ENCODE measurements at regions of chr6 and their contacts with region 1.

Region 1: GRCh38 chr6:121430514-121431460 is 4.7 kb upstream of the GJA1 start:
- DNase-seq: no peak
- ATAC-seq: no peak
- H3K4me3 ChIP-seq: no peak overlapping the region
- H3K4me3 Mint-ChIP-seq: no peak overlapping the region
- H3K27ac ChIP-seq: no peak overlapping the region
- H3K27ac Mint-ChIP-seq: peak overlapping the region in 1 of 9 donors; percentile 2
- H3K4me1 ChIP-seq: no peaks in the 10 kb centered on the region
- H3K4me1 Mint-ChIP-seq: peaks cover 0 to 23% (median 12%) of the 10 kb centered on the region in 7 donors
- H3K27me3 ChIP-seq: no peaks in the 10 kb centered on the region
- H3K27me3 Mint-ChIP-seq: peaks cover 0 to 9% (median 0%) of the 10 kb centered on the region in 5 donors

Region 2: GRCh38 chr6:121093928-121094327 is 336.9 kb before region 1 on chr6:
- CTCF ChIA-PET with region 1: no interaction called
- POLR2A ChIA-PET with region 1: no interaction called
- intact Hi-C with region 1: no loop called
- DNase-seq: no peak
- ATAC-seq: no peak
- H3K4me3 ChIP-seq: no peak overlapping the region
- H3K4me3 Mint-ChIP-seq: no peak overlapping the region
- H3K27ac ChIP-seq: no peak overlapping the region
- H3K27ac Mint-ChIP-seq: no peak overlapping the region
- H3K4me1 ChIP-seq: no peaks in the 10 kb centered on the region
- H3K4me1 Mint-ChIP-seq: no peaks in the 10 kb centered on the region
- H3K27me3 ChIP-seq: no peaks in the 10 kb centered on the region
- H3K27me3 Mint-ChIP-seq: no peaks in the 10 kb centered on the region

Region 3: DNA sequence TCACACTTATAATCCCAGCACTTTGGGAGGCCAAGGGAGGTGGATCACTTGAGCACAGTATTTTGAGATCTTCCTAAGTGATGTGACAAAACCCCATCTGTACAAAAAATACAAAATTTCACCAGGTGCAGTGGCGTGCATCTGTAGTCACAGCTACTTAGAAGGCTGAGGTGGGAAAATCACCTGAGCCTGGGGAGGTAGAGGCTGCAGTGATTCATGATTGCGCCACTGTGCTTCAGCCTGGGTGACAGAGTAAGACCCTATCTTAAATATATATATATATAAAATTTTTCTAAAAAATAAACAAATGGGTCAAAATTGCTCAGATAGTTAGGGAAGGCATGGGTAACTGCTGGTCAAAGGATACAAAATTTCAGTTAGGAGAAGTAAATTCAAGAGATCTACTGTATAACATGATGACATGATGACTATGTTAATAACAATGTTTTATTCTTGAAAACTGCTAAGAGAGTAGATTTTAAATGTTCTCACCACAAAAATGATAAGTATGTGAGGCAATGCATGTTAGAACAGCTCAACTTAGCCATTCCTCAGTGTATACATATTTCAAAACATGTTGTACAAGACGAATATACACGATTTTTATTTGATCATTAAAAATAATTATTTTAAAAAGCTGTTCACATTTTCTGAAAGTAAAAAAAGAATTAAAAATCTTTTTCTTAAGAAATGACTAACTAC is 120.9 kb before region 1 on chr6:
- CTCF ChIA-PET with region 1: no interaction called
- POLR2A ChIA-PET with region 1: no interaction called
- intact Hi-C with region 1: no loop called
- DNase-seq: no peak
- ATAC-seq: no peak
- H3K4me3 ChIP-seq: no peak overlapping the region
- H3K4me3 Mint-ChIP-seq: no peak overlapping the region
- H3K27ac ChIP-seq: no peak overlapping the region
- H3K27ac Mint-ChIP-seq: no peak overlapping the region
- H3K4me1 ChIP-seq: no peaks in the 10 kb centered on the region
- H3K4me1 Mint-ChIP-seq: no peaks in the 10 kb centered on the region
- H3K27me3 ChIP-seq: no peaks in the 10 kb centered on the region
- H3K27me3 Mint-ChIP-seq: no peaks in the 10 kb centered on the region

Region 4: DNA sequence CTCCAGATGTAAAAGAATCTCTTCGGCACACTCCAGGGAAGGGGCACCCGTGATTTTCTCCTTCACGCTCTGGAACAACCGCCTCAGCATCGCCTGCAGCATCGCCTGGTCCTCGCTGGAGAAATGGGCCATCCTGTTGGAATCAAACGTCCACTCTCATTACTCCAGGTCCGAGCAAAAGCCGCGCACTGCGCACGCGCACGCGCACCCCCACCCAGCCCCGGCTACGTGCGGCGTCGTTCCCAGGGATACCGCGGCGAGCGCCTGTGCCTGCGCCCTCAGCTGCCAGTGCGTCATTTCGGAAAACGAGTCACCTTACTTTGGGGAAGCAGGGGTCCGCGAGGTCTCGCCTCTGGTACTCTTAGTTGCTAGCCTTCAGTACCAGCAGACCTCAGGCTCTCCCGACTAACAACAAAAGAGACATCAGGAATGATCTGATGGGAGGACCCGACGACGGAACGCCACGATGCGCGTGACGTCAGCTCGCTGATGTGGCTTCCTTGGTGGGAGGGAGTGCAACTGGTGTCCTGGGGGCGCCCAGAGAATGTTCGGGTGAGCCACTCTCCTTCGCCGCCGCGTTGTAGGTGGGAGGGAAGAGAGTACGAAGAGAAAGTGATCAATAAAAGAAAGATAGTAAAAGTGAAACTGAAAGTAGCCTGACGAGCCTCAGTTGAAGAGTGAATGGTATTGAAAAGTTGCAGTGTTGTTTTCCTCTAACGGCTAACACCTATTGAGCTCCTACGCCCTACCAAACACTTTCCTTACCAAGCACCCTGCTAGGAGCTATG is 96.3 kb before region 1 on chr6 and contains the start of gene TBC1D32:
- CTCF ChIA-PET with region 1: no interaction called
- POLR2A ChIA-PET with region 1: no interaction called
- intact Hi-C with region 1: no loop called
- DNase-seq: peak; percentile 84 to 90 (median 89)
- ATAC-seq: peak; percentile 92
- H3K4me3 ChIP-seq: peak within 1 kb of the TSS; percentile 74
- H3K4me3 Mint-ChIP-seq: peak within 1 kb of the TSS; percentile 86 to 99 (median 98)
- H3K27ac ChIP-seq: peak within 1 kb of the TSS; percentile 97
- H3K27ac Mint-ChIP-seq: peak within 1 kb of the TSS; percentile 97 to 100 (median 99)
- H3K4me1 ChIP-seq: peaks cover 4 to 8% of the 10 kb centered on the region in 2 donors
- H3K4me1 Mint-ChIP-seq: peaks cover 16 to 45% (median 35%) of the 10 kb centered on the region in 7 donors
- H3K27me3 ChIP-seq: no peaks in the 10 kb centered on the region
- H3K27me3 Mint-ChIP-seq: peaks cover 0 to 11% (median 0%) of the 10 kb centered on the region in 5 donors
- total RNA-seq, gene TBC1D32: 12.5 to 17.7 (median 15.8) TPM

Region 5: GRCh38 chr6:121694389-121695251 is 263.8 kb after region 1 on chr6:
- CTCF ChIA-PET with region 1: no interaction called
- POLR2A ChIA-PET with region 1: no interaction called
- intact Hi-C with region 1: loop called in 1 of 2 experiments (anchors 10 kb)
- DNase-seq: no peak
- ATAC-seq: no peak
- H3K4me3 ChIP-seq: no peak overlapping the region
- H3K4me3 Mint-ChIP-seq: no peak overlapping the region
- H3K27ac ChIP-seq: no peak overlapping the region
- H3K27ac Mint-ChIP-seq: no peak overlapping the region
- H3K4me1 ChIP-seq: peaks cover 0 to 9% of the 10 kb centered on the region in 2 donors
- H3K4me1 Mint-ChIP-seq: peaks cover 0 to 22% (median 11%) of the 10 kb centered on the region in 7 donors
- H3K27me3 ChIP-seq: no peaks in the 10 kb centered on the region
- H3K27me3 Mint-ChIP-seq: peaks cover 0 to 6% (median 0%) of the 10 kb centered on the region in 5 donors

Region 6: DNA sequence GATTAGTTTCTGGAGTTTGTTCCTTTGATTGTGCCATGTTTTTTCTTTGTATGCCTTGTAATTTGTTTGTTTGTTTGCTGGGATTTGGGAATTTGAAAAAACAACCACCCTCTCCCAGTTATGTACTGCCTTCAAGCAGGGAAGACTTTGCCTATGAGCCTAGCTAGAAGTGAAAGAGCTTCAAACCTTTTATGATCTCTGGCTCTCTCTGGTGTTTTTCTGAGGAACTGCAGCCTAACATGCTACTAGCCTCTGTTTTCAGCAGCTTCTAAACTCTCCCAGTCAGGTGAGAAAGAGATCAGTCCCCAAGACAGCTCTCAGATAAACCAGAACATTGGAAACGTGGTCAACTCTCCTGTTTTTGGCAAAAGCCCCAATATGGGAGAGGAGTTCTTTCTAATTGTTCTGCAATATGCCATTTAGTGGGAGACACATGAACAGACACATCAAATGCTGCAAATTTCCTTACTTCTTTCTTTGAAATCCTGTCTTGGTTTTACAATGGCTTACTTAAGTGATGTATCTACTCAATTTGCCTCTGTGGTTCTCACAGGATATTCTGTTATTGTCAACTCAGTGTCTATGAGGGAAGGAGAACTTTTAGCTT is 1099.8 kb after region 1 on chr6:
- CTCF ChIA-PET with region 1: interaction called, 5 read pairs
- POLR2A ChIA-PET with region 1: no interaction called
- intact Hi-C with region 1: loop called in 1 of 2 experiments (anchors 1 kb)
- DNase-seq: peak in 8 of 9 donors; percentile 36 to 73 (median 64)
- ATAC-seq: peak; percentile 86
- H3K4me3 ChIP-seq: no peak overlapping the region
- H3K4me3 Mint-ChIP-seq: no peak overlapping the region
- H3K27ac ChIP-seq: no peak overlapping the region
- H3K27ac Mint-ChIP-seq: no peak overlapping the region
- H3K4me1 ChIP-seq: no peaks in the 10 kb centered on the region
- H3K4me1 Mint-ChIP-seq: peaks cover 0 to 8% (median 0%) of the 10 kb centered on the region in 7 donors
- H3K27me3 ChIP-seq: no peaks in the 10 kb centered on the region
- H3K27me3 Mint-ChIP-seq: peaks cover 34 to 48% (median 37%) of the 10 kb centered on the region in 5 donors

Region 7: GRCh38 chr6:122839477-122839876 is 1408.7 kb after region 1 on chr6:
- CTCF ChIA-PET with region 1: no interaction called
- POLR2A ChIA-PET with region 1: no interaction called
- intact Hi-C with region 1: loop called in 1 of 2 experiments (anchors 10 kb)
- DNase-seq: peak in 7 of 9 donors; percentile 18 to 47 (median 36)
- ATAC-seq: peak; percentile 79
- H3K4me3 ChIP-seq: no peak overlapping the region
- H3K4me3 Mint-ChIP-seq: no peak overlapping the region
- H3K27ac ChIP-seq: no peak overlapping the region
- H3K27ac Mint-ChIP-seq: no peak overlapping the region
- H3K4me1 ChIP-seq: no peaks in the 10 kb centered on the region
- H3K4me1 Mint-ChIP-seq: no peaks in the 10 kb centered on the region
- H3K27me3 ChIP-seq: no peaks in the 10 kb centered on the region
- H3K27me3 Mint-ChIP-seq: peaks cover 2 to 26% (median 9%) of the 10 kb centered on the region in 5 donors

Measured in naive thymus-derived CD4-positive, alpha-beta T cell (primary cell).